ENCODE measurements at regions of chr7 and their contacts with region 1.

Region 1: DNA sequence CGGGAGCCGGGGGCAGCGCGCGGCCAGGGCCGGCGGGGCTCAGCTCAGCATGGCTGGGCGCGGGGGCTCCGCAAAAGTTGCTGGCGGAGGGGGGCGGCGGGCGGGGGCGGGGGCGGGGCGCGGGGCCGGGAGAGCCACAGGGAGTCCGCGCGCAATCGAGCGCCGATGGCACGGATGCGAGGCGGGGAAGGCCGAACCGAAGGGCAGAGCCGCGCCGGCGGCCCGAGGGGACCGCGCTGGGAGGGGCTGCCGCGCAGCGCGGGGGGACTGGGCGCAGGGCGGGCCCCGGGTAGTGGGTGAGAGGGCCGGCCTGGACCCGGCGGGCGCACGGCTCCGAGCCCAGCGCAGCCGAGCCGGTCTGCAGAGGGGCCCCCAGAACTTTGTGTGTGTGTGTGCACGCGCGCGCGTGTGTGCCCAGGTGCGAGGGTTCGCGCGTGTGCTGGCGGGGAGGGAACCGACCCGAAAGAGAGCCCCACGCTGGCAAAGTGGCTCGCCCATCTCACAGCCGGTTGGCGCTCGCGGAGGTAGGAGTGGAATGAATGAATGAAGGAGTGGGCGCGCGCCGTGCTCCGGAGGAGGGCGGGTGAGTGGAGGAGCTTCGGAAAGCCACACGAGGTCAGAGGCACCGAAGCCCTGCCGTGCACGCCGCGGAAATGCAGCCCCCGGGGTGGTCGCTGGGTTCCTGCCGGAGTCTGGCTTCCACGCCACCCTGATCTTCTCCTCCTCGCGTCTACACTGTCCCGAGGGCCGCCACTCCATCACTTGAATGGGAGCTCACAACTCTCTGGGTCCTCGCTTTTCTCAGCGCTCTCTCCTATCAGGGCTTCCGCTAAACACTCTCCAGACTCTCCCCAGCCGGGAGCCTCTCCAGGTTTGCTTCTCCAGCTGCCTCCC is at the start of gene HIPK2:
- DNase-seq: peak; percentile 82
- ATAC-seq: peak; percentile 78
- H3K4me3 ChIP-seq: peak within 1 kb of the TSS; percentile 71 to 97 (median 78)
- H3K4me3 Mint-ChIP-seq: peak within 1 kb of the TSS; percentile 98
- H3K27ac ChIP-seq: peak within 1 kb of the TSS; percentile 66 to 81
- H3K27ac Mint-ChIP-seq: peak within 1 kb of the TSS; percentile 95
- H3K4me1 ChIP-seq: peaks cover 11 to 23% of the 10 kb centered on the region in 2 donors
- H3K4me1 Mint-ChIP-seq: peaks cover 35% of the 10 kb centered on the region
- H3K27me3 ChIP-seq: peaks cover 0 to 5% (median 1%) of the 10 kb centered on the region in 4 experiments
- H3K27me3 Mint-ChIP-seq: peaks cover 16% of the 10 kb centered on the region
- CTCF ChIP-seq: no peak
- total RNA-seq, gene HIPK2: 58.2 and 60.5 TPM in 2 replicates

Region 2: GRCh38 chr7:139714163-139714901 is 63.9 kb before region 1 on chr7:
- CTCF ChIA-PET with region 1: no interaction called
- POLR2A ChIA-PET with region 1: no interaction called
- intact Hi-C with region 1: loop called (anchors 2 kb)
- DNase-seq: peak; percentile 78
- ATAC-seq: peak; percentile 97
- H3K4me3 ChIP-seq: peak overlapping the region in 4 of 5 experiments; percentile 24 to 44 (median 40)
- H3K4me3 Mint-ChIP-seq: peak overlapping the region; percentile 69
- H3K27ac ChIP-seq: peak overlapping the region; percentile 77 to 80
- H3K27ac Mint-ChIP-seq: peak overlapping the region; percentile 92
- H3K4me1 ChIP-seq: peaks cover 25 to 31% of the 10 kb centered on the region in 2 donors
- H3K4me1 Mint-ChIP-seq: peaks cover 37% of the 10 kb centered on the region
- H3K27me3 ChIP-seq: no peaks in the 10 kb centered on the region
- H3K27me3 Mint-ChIP-seq: no peaks in the 10 kb centered on the region
- CTCF ChIP-seq: no peak

Region 3: DNA sequence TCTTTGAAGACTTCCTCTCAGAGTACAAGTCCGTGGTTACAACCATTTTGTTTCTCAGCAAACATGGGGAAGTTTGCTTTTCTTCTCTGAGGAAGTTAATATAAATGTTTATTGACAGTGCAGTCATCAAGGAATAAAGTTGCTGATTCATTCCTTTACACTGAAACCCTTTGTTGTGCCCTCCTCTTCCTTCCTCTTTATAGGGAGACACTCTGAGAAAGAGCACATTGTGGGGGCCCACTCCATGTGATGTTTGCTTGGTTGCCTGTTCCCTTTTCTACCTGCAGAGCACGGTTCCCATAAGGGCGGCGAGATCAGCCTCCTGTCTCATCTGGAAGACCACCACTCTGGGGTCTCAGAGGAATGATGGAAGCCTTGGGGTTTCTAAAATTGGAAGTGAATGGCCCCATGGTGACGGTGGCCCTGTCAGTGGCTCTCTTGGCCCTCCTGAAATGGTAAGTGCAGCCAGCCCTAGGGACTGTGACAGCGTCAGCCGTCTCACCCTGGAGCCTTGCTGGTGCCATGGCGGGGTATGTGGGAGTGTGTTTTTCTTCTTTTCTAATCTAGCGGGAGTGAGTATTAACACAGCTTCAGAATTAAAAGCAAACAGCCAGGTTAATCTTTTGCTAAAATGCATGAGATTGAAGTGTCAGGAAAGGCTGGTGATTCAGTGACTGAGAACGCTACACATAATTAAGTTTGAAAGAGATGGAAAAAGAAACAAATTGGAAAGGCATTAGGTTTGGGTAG is 51.0 kb after region 1 on chr7 and contains the start of gene TBXAS1:
- CTCF ChIA-PET with region 1: no interaction called
- POLR2A ChIA-PET with region 1: no interaction called
- intact Hi-C with region 1: loop called (anchors 2 kb)
- DNase-seq: peak; percentile 62
- ATAC-seq: peak; percentile 70
- H3K4me3 ChIP-seq: peak within 1 kb of the TSS; percentile 7 to 69 (median 45)
- H3K4me3 Mint-ChIP-seq: peak within 1 kb of the TSS; percentile 69
- H3K27ac ChIP-seq: peak within 1 kb of the TSS; percentile 56 to 69
- H3K27ac Mint-ChIP-seq: peak within 1 kb of the TSS; percentile 71
- H3K4me1 ChIP-seq: peaks cover 32 to 34% of the 10 kb centered on the region in 2 donors
- H3K4me1 Mint-ChIP-seq: peaks cover 34% of the 10 kb centered on the region
- H3K27me3 ChIP-seq: no peaks in the 10 kb centered on the region
- H3K27me3 Mint-ChIP-seq: peaks cover 10% of the 10 kb centered on the region
- CTCF ChIP-seq: no peak
- total RNA-seq, gene TBXAS1: 8.1 and 14.2 TPM in 2 replicates

Region 4: DNA sequence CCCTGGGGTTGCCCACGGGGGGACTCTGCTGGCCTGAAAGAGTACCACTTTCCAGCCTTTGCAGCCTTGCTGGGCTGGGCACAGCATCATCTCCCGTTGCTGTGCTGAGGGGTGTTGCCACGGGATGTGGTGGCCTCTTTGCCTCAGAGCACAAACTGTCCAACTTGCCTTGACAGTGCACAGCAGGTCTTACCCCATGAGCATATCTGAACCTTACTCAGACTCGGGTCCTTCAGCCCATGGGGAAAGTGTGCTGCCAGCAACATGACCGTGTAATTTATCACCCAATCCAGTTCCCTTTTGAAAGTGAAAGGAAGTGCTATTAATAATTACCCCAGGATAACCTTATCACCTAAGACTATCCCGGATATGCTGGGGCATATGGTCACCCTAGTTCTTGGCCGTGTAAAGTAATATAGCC is 97.6 kb after region 1 on chr7:
- CTCF ChIA-PET with region 1: no interaction called
- POLR2A ChIA-PET with region 1: no interaction called
- intact Hi-C with region 1: no loop called
- DNase-seq: no peak
- ATAC-seq: no peak
- H3K4me3 ChIP-seq: no peak overlapping the region
- H3K4me3 Mint-ChIP-seq: no peak overlapping the region
- H3K27ac ChIP-seq: no peak overlapping the region
- H3K27ac Mint-ChIP-seq: no peak overlapping the region
- H3K4me1 ChIP-seq: peaks cover 3 to 4% of the 10 kb centered on the region in 2 donors
- H3K4me1 Mint-ChIP-seq: peaks cover 2% of the 10 kb centered on the region
- H3K27me3 ChIP-seq: no peaks in the 10 kb centered on the region
- H3K27me3 Mint-ChIP-seq: peaks cover 4% of the 10 kb centered on the region
- CTCF ChIP-seq: no peak

Region 5: DNA sequence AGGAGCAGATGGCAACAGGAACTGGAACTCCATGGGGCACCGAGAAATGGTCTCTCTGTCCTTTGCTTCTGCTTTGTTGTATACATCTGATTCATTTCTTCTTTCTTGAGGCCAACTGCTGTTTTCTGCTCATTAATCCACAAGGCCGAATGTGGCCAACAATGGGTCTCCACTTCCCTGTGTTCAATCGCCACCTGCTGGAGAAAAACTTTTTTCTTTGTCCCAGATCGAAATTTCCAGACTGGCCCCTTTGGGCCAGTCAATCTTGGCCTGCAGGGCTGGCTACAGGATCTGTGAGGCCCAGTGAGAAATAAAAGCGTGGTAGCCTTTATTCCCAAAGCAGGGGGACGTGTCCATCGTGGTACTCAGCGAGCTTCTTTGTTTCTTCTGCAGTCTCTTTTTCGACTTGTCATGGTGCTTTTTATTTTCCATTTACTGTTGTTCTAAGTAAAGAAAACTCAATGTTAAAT is 225.8 kb after region 1 on chr7:
- CTCF ChIA-PET with region 1: interaction called, 7 read pairs
- POLR2A ChIA-PET with region 1: no interaction called
- intact Hi-C with region 1: loop called (anchors 1 kb)
- DNase-seq: peak; percentile 61
- ATAC-seq: peak; percentile 49
- H3K4me3 ChIP-seq: no peak overlapping the region
- H3K4me3 Mint-ChIP-seq: no peak overlapping the region
- H3K27ac ChIP-seq: no peak overlapping the region
- H3K27ac Mint-ChIP-seq: peak overlapping the region; percentile 46
- H3K4me1 ChIP-seq: peaks cover 0 to 2% of the 10 kb centered on the region in 2 donors
- H3K4me1 Mint-ChIP-seq: peaks cover 2% of the 10 kb centered on the region
- H3K27me3 ChIP-seq: no peaks in the 10 kb centered on the region
- H3K27me3 Mint-ChIP-seq: no peaks in the 10 kb centered on the region
- CTCF ChIP-seq: peak; percentile 75

Region 6: GRCh38 chr7:140230861-140231770 is 452.9 kb after region 1 on chr7:
- CTCF ChIA-PET with region 1: no interaction called
- POLR2A ChIA-PET with region 1: no interaction called
- intact Hi-C with region 1: loop called (anchors 5 kb)
- DNase-seq: peak; percentile 69
- ATAC-seq: peak; percentile 10
- H3K4me3 ChIP-seq: peak overlapping the region; percentile 57 to 80 (median 64)
- H3K4me3 Mint-ChIP-seq: peak overlapping the region; percentile 90
- H3K27ac ChIP-seq: peak overlapping the region; percentile 93 to 96
- H3K27ac Mint-ChIP-seq: peak overlapping the region; percentile 99
- H3K4me1 ChIP-seq: peaks cover 49 to 74% of the 10 kb centered on the region in 2 donors
- H3K4me1 Mint-ChIP-seq: peaks cover 58% of the 10 kb centered on the region
- H3K27me3 ChIP-seq: no peaks in the 10 kb centered on the region
- H3K27me3 Mint-ChIP-seq: no peaks in the 10 kb centered on the region
- CTCF ChIP-seq: no peak